ENCODE measurements at regions of chr9 and their contacts with region 1.

Region 1: DNA sequence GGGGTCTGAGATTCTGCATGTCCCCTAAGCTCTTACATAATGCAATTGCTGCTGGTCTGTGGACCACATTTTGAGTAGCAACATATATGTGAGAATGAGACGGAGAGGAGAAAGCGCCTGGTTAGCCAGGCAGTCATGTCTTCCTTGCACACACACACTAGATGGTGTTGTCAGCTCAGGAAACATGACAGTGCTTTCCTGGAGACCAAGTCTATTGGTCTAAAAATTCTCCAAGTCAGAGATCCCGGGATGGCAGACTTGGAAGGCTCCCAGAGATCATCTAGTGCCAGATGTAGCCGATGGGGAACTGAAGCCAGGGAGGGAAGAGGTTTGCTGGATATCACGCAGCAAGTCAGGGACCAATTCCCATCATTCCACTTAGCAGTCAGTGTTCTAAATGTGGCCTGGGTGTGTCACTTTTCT is 53.4 kb downstream of the GALNT12 start:
- DNase-seq: peak; percentile 97
- H3K4me3 ChIP-seq: no peak overlapping the region
- H3K27me3 ChIP-seq: no peaks in the 10 kb centered on the region; the same call in 1 of the 2 replicates
- CTCF ChIP-seq: peak; percentile 53

Region 2: GRCh38 chr9:98958271-98958984 is 97.5 kb after region 1 on chr9:
- CTCF ChIA-PET with region 1: interaction called, 24 read pairs
- POLR2A ChIA-PET with region 1: interaction called, 3 read pairs
- DNase-seq: peak; percentile 99
- H3K4me3 ChIP-seq: no peak overlapping the region
- H3K27me3 ChIP-seq: no peaks in the 10 kb centered on the region
- CTCF ChIP-seq: 0 out of 2 replicates have a peak, but pooled peaks have one; percentile 4

Region 3: GRCh38 chr9:98989036-98990000 is 128.4 kb after region 1 on chr9:
- CTCF ChIA-PET with region 1: interaction called, 20 read pairs
- POLR2A ChIA-PET with region 1: no interaction called
- DNase-seq: peak; percentile 99
- H3K4me3 ChIP-seq: no peak overlapping the region
- H3K27me3 ChIP-seq: no peaks in the 10 kb centered on the region; the same call in none of the 2 replicates
- CTCF ChIP-seq: peak; percentile 30; the same call in 1 of the 2 replicates

Region 4: GRCh38 chr9:99012942-99013512 is 152.1 kb after region 1 on chr9:
- CTCF ChIA-PET with region 1: interaction called, 14 read pairs
- POLR2A ChIA-PET with region 1: no interaction called
- DNase-seq: no peak
- H3K4me3 ChIP-seq: no peak overlapping the region
- H3K27me3 ChIP-seq: no peaks in the 10 kb centered on the region
- CTCF ChIP-seq: no peak

Region 5: DNA sequence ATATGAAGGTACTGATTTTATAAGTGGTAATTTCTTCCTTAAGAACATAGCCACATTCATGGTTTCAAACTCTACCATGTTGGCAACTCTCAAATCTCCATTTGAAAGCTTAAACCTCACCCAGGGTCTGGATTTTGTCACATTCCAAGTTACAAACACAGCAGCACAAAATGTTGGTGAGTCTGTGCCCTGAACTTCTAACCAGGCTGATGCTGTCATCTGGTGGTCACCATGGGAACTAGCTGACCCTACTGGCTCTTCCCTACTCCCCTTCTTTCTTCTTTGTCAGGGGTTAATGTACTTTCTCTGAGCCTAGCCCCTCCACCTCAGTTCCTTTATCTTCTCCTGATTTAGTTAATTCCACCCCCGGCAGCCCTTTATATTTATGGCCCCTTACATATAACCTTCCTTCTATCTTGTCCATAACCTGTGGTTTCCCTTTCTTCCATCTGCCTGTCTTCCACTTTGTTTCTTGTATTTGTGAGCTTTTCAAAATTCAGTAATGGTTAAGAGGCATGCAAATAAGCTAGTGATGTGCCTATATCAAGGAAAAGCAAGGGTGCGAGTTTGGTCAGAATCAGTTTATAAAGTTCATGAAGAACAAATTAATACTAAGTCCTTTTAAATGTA is 279.9 kb after region 1 on chr9:
- CTCF ChIA-PET with region 1: interaction called, 26 read pairs
- POLR2A ChIA-PET with region 1: no interaction called
- DNase-seq: no peak
- H3K4me3 ChIP-seq: no peak overlapping the region
- H3K27me3 ChIP-seq: no peaks in the 10 kb centered on the region
- CTCF ChIP-seq: peak; percentile 89